SK-N-SH (cell line): ENCODE measurements at regions of chr20 and their contacts with region 1.

Region 1: GRCh38 chr20:20837574-20838021 is 125.2 kb upstream of the RALGAPA2 start:
- DNase-seq: peak; percentile 63
- H3K4me3 ChIP-seq: peak overlapping the region in 1 of 2 experiments; percentile 47; a peak in 2 of 4 replicates
- H3K27ac ChIP-seq: no peak overlapping the region
- H3K4me1 ChIP-seq: no peaks in the 10 kb centered on the region; a peak in 1 of 4 replicates
- H3K27me3 ChIP-seq: peaks cover 36% of the 10 kb centered on the region
- CTCF ChIP-seq: peak; percentile 77
- EP300 ChIP-seq: no peak
- RAD21 ChIP-seq: peak; percentile 75

Region 2: GRCh38 chr20:19934792-19935491 is 902.7 kb before region 1 on chr20:
- CTCF ChIA-PET with region 1: no interaction called
- POLR2A ChIA-PET with region 1: no interaction called
- DNase-seq: no peak
- H3K4me3 ChIP-seq: no peak overlapping the region
- H3K27ac ChIP-seq: no peak overlapping the region
- H3K4me1 ChIP-seq: peaks cover 5 to 10% of the 10 kb centered on the region in 2 experiments; a peak in 2 of 4 replicates
- H3K27me3 ChIP-seq: no peaks in the 10 kb centered on the region
- CTCF ChIP-seq: no peak
- EP300 ChIP-seq: no peak
- RAD21 ChIP-seq: no peak

Region 3: GRCh38 chr20:20292472-20292871 is 545.1 kb before region 1 on chr20:
- CTCF ChIA-PET with region 1: no interaction called
- POLR2A ChIA-PET with region 1: no interaction called
- DNase-seq: no peak
- H3K4me3 ChIP-seq: no peak overlapping the region
- H3K27ac ChIP-seq: no peak overlapping the region
- H3K4me1 ChIP-seq: no peaks in the 10 kb centered on the region
- H3K27me3 ChIP-seq: no peaks in the 10 kb centered on the region
- CTCF ChIP-seq: no peak
- EP300 ChIP-seq: no peak
- RAD21 ChIP-seq: no peak

Region 4: GRCh38 chr20:20824924-20825584 is 12.5 kb before region 1 on chr20:
- CTCF ChIA-PET with region 1: interaction called, 64 read pairs
- POLR2A ChIA-PET with region 1: no interaction called
- DNase-seq: peak; percentile 56
- H3K4me3 ChIP-seq: peak overlapping the region in 1 of 2 experiments; percentile 46; a peak in 1 of 4 replicates
- H3K27ac ChIP-seq: no peak overlapping the region
- H3K4me1 ChIP-seq: no peaks in the 10 kb centered on the region
- H3K27me3 ChIP-seq: peaks cover 40% of the 10 kb centered on the region
- CTCF ChIP-seq: peak; percentile 75
- EP300 ChIP-seq: no peak
- RAD21 ChIP-seq: peak; percentile 68

Region 5: GRCh38 chr20:20849161-20849560 is 11.6 kb after region 1 on chr20:
- CTCF ChIA-PET with region 1: interaction called, 32 read pairs
- POLR2A ChIA-PET with region 1: no interaction called
- DNase-seq: no peak
- H3K4me3 ChIP-seq: no peak overlapping the region
- H3K27ac ChIP-seq: no peak overlapping the region
- H3K4me1 ChIP-seq: no peaks in the 10 kb centered on the region
- H3K27me3 ChIP-seq: peaks cover 25% of the 10 kb centered on the region
- CTCF ChIP-seq: no peak
- EP300 ChIP-seq: no peak
- RAD21 ChIP-seq: no peak

Region 6: DNA sequence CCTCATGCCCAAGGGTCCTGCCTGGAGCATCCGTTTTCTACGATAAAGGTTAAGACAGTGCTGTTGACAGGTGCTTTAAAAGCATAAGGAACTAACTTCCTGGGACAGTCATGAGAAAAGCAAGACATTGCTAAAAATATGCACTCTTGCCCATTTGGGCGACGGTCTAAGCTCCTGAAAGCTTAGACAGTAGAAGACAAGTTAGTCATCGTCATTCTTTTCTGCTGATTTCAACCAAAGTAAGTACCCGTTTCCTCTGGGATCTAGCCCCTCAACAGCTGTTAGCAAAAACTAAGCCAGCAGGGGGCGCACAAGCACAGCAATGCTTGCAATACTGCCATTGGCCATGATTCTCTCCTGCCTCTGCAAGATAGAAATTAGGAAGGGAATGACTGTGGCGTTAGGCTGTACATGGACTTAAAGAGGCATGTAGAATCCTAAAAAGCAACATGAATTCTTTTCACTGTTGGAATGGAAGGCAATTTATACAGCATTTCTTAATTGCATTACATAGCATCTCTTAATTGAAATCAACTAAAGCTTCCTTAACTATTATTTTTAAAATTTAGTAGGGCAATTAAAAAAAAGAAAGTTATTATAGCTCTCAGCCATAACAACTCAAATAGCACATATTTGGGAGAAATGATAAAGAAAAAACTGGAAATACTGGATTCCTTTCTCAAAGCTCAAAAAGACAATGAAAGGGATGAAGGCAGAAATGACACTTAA is 22.6 kb after region 1 on chr20:
- CTCF ChIA-PET with region 1: interaction called, 13 read pairs
- POLR2A ChIA-PET with region 1: no interaction called
- DNase-seq: peak; percentile 72
- H3K4me3 ChIP-seq: peak overlapping the region in 1 of 2 experiments; percentile 28; a peak in 1 of 4 replicates
- H3K27ac ChIP-seq: no peak overlapping the region
- H3K4me1 ChIP-seq: no peaks in the 10 kb centered on the region
- H3K27me3 ChIP-seq: peaks cover 10% of the 10 kb centered on the region; the same call in 1 of the 2 replicates
- CTCF ChIP-seq: peak; percentile 96
- EP300 ChIP-seq: no peak
- RAD21 ChIP-seq: peak; percentile 82

Region 7: DNA sequence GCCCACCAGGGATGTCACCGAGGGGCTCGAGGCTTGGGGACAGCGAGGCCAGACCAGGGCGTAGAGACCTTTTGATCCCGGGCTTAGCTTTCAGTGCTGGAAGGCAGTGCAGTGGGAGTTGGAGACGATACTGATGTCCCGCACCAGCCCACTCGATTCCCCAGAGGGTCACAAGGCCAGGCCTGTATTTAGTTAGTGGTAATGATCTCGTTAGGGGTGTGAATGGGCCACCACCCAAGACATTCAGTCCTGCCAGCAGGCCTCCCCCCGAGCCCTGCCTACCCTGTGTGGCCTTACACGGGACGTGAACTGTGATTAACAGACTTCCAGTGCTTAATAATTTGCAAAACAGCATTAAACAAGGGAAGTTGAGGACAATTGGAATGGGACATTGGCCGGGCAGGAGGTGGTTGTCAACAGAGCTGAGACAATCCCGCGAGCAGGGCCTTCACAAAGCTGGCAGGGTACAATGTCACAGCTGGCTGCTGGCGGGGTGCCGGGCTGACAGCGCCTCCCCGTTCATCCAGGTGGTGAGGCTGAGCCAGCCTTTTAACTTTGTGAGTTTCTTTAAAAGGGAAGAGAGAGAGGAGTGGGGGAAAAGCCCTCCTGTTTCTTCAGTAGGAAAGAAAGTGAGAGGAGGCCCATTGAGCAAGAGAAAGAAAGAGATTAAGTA is 50.1 kb after region 1 on chr20:
- CTCF ChIA-PET with region 1: no interaction called
- POLR2A ChIA-PET with region 1: no interaction called
- DNase-seq: no peak
- H3K4me3 ChIP-seq: no peak overlapping the region
- H3K27ac ChIP-seq: no peak overlapping the region
- H3K4me1 ChIP-seq: no peaks in the 10 kb centered on the region
- H3K27me3 ChIP-seq: peaks cover 10% of the 10 kb centered on the region; the same call in 1 of the 2 replicates
- CTCF ChIP-seq: no peak
- EP300 ChIP-seq: no peak
- RAD21 ChIP-seq: no peak

Region 8: DNA sequence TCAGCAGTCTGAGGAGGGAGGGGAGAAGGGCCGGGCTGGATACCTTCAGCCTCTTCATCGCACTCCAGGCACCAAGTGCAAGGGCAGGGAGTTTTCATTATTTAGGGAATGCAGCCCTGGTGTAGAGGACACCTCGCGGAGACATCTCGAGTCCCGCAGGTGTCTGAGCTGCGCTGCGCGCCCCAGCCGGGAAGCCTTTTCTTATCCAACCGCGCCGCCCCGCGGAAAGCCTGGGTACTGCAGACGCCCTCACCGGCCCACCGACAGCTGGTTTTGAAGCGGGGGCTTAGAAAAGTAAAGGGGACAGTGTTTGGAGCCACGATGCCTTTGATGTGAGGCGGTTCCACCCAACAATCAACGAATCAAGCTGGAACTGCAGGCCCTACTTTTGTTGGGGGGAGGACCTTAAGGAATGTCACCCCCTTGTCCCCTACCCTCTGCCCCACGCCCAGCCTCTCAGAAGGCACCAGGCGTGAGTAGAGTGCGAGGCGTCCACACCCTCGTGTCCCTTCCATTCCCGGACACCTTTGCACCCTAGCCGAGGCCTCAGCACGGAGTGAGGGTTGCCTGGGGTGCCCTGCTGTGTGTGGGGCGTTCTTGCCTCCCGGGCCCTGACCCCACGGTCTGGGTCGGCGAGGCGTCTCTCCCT is 667.7 kb after region 1 on chr20:
- CTCF ChIA-PET with region 1: interaction called, 59 read pairs
- POLR2A ChIA-PET with region 1: no interaction called
- DNase-seq: peak; percentile 85
- H3K4me3 ChIP-seq: peak overlapping the region in 1 of 2 experiments; percentile 23; a peak in 1 of 4 replicates
- H3K27ac ChIP-seq: no peak overlapping the region
- H3K4me1 ChIP-seq: peaks cover 0 to 4% of the 10 kb centered on the region in 2 experiments; a peak in 2 of 4 replicates
- H3K27me3 ChIP-seq: peaks cover 79% of the 10 kb centered on the region
- CTCF ChIP-seq: peak; percentile 97
- EP300 ChIP-seq: no peak
- RAD21 ChIP-seq: peak; percentile 93

Region 9: DNA sequence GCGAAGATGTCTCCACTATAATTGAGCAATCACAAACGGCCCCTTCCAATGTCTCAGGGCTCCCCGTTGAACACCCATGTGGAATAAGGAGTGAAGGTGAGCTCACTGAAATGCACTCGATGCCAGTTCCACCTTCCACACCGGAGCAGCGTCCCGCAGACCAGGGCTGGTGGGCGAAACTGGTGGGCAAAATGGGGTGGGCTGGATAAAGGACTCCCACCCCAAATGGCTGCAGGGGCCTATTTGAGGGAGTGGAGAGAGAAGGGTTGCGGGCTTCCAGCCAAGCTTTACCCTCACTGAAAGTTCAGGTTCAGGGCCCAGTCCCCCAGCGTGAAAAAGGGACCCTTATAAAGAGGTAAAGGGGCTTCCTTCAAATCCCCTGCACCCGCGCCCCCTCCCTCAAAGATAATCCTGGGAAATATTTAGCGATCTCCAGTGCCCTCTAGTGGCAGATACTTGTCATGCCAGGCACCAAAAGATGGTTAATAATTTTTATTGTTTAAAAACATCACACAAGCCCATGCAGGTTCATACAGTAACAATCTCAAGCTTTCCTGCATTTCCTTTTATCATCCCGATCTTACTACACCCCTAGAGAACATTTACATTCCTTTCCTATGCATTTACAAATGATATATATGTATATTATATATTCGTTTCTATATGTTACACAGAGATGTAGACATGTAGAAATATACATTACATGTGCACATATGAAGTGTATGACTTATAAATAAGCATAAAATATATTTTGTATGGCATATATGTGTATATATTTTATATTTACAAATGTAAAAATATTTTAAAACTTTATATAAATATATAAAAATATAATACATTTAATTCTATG is 734.5 kb after region 1 on chr20:
- CTCF ChIA-PET with region 1: interaction called, 24 read pairs
- POLR2A ChIA-PET with region 1: no interaction called
- DNase-seq: peak; percentile 35
- H3K4me3 ChIP-seq: no peak overlapping the region; a peak in 1 of 4 replicates
- H3K27ac ChIP-seq: no peak overlapping the region
- H3K4me1 ChIP-seq: no peaks in the 10 kb centered on the region; a peak in 1 of 4 replicates
- H3K27me3 ChIP-seq: peaks cover 51% of the 10 kb centered on the region; the same call in 1 of the 2 replicates
- CTCF ChIP-seq: peak; percentile 93
- EP300 ChIP-seq: no peak
- RAD21 ChIP-seq: peak; percentile 65

Region 10: DNA sequence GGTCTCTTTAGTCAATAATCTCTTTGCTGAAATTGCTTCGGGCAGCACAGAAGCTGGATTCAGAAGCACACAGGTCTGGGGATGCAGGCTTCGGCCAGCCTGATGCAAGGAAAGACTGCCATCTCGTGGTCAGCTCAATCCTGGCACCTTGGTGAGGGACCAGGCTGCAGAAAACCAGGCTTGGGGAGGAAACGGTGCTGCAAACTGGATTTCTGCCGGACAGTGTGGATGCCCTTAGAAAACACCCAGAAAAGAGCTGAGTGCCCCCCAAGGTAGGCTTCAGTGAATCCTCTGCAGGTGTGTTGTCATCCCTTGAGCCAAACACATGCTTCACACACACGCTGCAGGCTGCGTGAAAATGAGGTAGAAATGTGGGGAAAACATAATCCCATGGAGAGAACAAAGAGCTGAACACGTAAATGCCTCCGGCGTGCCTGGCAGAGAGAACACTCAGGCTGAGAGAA is 778.1 kb after region 1 on chr20:
- CTCF ChIA-PET with region 1: interaction called, 45 read pairs
- POLR2A ChIA-PET with region 1: no interaction called
- DNase-seq: peak; percentile 70
- H3K4me3 ChIP-seq: no peak overlapping the region; a peak in 1 of 4 replicates
- H3K27ac ChIP-seq: no peak overlapping the region
- H3K4me1 ChIP-seq: no peaks in the 10 kb centered on the region
- H3K27me3 ChIP-seq: peaks cover 17% of the 10 kb centered on the region; the same call in 1 of the 2 replicates
- CTCF ChIP-seq: peak; percentile 85
- EP300 ChIP-seq: no peak
- RAD21 ChIP-seq: peak; percentile 73